GM10248 (cell line): ENCODE measurements at regions of chr1 and their contacts with region 1.

Region 1: DNA sequence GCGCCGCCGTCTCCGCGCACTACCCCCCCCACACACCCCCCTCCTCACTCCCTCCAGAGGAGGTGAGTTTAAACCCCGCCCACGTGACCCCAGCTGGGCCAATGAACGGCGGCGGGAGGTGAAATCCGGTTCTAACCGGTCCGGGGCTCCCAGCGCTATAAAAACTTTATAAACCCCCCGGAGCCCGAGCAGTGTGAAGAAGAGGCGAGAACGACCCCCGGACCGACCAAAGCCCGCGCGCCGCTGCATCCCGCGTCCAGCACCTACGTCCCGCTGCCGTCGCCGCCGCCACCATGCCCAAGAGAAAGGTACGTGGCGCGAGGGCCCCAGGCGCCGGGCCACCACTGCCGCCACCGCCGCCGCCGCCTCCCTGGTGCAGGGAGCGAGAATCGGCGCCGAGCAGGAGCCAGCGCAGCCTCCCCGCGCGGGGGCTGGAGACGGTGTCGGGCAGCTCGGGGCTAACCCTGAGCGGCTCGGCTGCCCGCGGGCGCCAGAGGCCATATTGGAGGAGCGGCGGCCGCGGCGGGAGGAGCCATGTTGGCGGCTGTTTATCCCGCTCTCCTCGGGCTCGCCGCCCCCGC is at the start of gene HMGN2:
- DNase-seq: peak; percentile 86
- CTCF ChIP-seq: no peak

Region 2: DNA sequence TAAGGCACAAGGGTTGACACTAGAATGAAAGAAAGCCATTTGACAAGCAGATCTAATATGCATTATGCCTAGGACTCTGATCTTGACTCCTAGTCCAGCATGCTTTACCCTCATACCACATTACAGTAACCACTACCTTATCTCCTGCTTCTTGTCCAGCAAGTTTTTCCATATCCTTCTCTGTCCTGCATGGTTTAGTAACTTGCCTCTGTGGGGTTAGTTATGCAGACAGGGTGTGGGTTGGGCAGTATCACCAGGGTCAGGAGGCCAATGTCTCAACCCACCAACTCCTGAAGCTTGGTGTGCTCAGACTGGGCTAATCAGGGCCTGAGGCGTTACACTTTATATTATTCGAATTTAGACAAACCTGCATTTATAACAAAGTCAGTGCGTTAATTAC is 21.5 kb before region 1 on chr1:
- CTCF ChIA-PET with region 1: interaction called, 11 read pairs
- POLR2A ChIA-PET with region 1: no interaction called
- DNase-seq: no peak
- CTCF ChIP-seq: no peak

Region 3: DNA sequence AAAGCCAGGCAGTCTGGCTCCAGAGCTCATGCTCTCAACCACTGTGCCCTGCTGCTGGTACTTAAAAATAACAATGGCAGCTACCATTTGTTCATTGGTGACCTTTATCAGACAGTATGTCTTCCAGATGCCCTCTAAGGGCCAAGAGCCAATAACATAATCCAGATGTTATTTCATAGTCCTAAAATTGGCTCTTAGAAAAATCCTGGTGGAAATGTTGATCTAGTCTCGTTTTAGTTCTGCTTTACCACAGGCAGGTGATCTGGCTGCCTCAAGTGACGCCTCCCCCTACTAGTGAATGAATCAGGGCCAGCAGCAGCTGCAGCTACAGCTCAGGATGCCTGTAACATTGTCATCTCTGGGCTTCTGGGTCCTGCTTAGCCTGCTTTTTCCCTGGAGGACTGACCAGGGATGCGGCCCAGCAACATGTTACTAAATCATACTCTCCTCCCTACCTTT is 12.8 kb before region 1 on chr1:
- CTCF ChIA-PET with region 1: interaction called, 33 read pairs
- POLR2A ChIA-PET with region 1: no interaction called
- DNase-seq: no peak
- CTCF ChIP-seq: no peak